T-cell (primary cell): ENCODE measurements at regions of chr17 and their contacts with region 1.

Region 1: DNA sequence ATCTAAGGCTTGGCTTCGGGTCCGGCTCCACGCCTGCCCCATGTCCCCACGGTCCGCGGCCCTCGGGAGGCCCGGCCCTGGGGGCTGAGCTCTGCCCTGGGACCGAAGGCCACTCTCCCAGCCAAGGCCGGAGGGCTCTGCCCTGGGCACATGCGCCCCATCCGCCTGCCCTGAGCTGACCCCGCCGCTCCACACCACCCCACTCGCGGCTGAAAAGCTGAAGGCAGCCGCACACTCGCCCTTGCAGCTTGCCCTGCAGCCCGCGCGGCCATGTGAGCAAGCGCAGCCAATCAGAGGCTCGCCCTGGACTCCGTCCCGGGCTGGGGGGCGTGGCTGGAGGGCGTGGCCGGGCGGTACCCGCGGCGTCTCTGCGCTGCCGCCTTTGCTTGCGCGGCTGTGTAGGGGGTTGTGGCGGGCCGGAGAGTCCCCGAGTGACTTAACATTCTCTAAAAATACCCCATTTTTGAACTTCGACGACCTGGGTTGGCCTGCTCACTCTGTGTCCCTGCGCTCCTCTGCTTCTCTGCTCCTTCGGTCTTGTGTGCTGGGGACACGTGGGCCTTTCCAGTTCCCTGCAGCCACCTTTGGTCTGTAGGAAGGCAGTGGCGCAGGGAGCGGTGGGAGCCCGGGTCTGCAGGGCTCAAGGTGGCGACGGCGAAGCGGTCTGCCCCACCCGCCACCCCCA is 8.8 kb upstream of the MAP2K3 start:
- DNase-seq: peak; percentile 75 to 97 (median 89)
- ATAC-seq: peak; percentile 85 to 88 (median 86)
- H3K4me3 ChIP-seq: peak overlapping the region; percentile 41 to 60
- H3K4me3 Mint-ChIP-seq: peak overlapping the region; percentile 88 to 90 (median 89)
- H3K27ac ChIP-seq: peak overlapping the region; percentile 87
- H3K27ac Mint-ChIP-seq: peak overlapping the region; percentile 91 to 92
- H3K4me1 ChIP-seq: peaks cover 17 to 51% of the 10 kb centered on the region in 2 experiments
- H3K4me1 Mint-ChIP-seq: peaks cover 45 to 53% (median 48%) of the 10 kb centered on the region in 3 donors
- H3K27me3 ChIP-seq: no peaks in the 10 kb centered on the region
- H3K27me3 Mint-ChIP-seq: no peaks in the 10 kb centered on the region

Region 2: GRCh38 chr17:21119247-21119918 is 156.3 kb before region 1 on chr17:
- CTCF ChIA-PET with region 1: interaction called, 3 to 12 read pairs
- POLR2A ChIA-PET with region 1: no interaction called
- DNase-seq: peak; percentile 41 to 88 (median 61)
- ATAC-seq: peak; percentile 81 to 93 (median 87)
- H3K4me3 ChIP-seq: no peak overlapping the region
- H3K4me3 Mint-ChIP-seq: no peak overlapping the region
- H3K27ac ChIP-seq: no peak overlapping the region
- H3K27ac Mint-ChIP-seq: no peak overlapping the region
- H3K4me1 ChIP-seq: peaks cover 0 to 6% of the 10 kb centered on the region in 2 experiments
- H3K4me1 Mint-ChIP-seq: peaks cover 6 to 12% (median 8%) of the 10 kb centered on the region in 3 donors
- H3K27me3 ChIP-seq: peaks cover 0 to 7% of the 10 kb centered on the region in 2 experiments
- H3K27me3 Mint-ChIP-seq: peaks cover 0 to 1% of the 10 kb centered on the region in 2 donors